AG04450 (cell line): ENCODE measurements at regions of chr12 and their contacts with region 1.

Region 1: GRCh38 chr12:56224102-56224701 is at the start of gene NABP2:
- DNase-seq: peak; percentile 92
- H3K4me3 ChIP-seq: peak within 1 kb of the TSS; percentile 82
- H3K27ac ChIP-seq: peak within 1 kb of the TSS; percentile 73
- H3K27me3 ChIP-seq: no peaks in the 10 kb centered on the region
- CTCF ChIP-seq: peak; percentile 82
- polyA plus RNA-seq, gene NABP2: 46.9 and 52.5 TPM in 2 replicates

Region 2: DNA sequence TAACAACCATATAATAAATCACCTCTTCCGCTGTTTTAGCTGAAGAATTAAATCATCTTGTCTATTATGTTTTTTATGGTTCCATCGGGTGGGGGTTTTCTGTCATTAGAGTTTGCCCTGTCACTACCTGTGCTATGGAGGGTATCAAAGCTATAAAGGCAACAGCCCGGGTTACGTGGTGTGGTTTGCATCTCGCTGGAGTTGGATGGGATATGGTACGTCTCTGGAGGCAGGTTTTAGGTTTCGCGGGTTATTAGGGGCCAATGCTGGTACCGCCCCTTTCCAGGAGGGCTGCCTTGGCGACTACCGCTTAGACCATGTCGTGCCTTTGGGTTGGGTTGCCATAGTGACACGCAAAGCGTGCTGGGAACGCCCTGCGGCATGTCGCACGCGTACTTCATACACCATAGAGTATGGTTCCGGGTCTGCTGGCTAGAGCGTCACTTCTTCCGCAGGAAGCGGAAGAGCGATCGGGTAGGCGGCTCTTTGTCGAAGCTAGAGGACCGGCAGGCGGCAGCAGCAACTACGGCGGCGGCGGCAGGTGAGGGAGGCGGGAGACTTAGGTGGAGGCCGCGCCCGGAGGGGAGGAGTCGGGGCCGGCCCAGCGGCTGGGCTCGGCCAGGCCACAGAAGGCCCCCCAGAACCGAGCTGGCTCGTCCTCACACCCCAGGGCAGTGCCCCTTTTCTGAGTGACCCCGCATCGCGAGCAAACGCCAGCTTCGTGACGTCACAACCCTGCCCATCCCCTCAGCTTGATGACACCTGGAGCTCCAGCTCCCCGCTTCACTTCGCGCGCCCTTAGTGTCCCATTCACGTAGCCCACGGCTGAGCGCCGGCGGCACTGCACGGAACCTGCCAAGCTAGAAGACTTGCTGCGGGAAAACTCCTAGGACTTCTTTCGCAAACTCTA is 106.2 kb before region 1 on chr12 and contains the start of gene ZC3H10:
- CTCF ChIA-PET with region 1: interaction called, 19 read pairs
- POLR2A ChIA-PET with region 1: interaction called, 14 read pairs
- DNase-seq: peak; percentile 99
- H3K4me3 ChIP-seq: peak within 1 kb of the TSS; percentile 93
- H3K27ac ChIP-seq: peak within 1 kb of the TSS; percentile 90
- H3K27me3 ChIP-seq: no peaks in the 10 kb centered on the region
- CTCF ChIP-seq: peak; percentile 62
- polyA plus RNA-seq, gene ZC3H10: 1.5 and 1.9 TPM in 2 replicates

Region 3: GRCh38 chr12:56146492-56147460 is 77.4 kb before region 1 on chr12:
- CTCF ChIA-PET with region 1: no interaction called
- POLR2A ChIA-PET with region 1: no interaction called
- DNase-seq: no peak
- H3K4me3 ChIP-seq: no peak overlapping the region
- H3K27ac ChIP-seq: no peak overlapping the region
- H3K27me3 ChIP-seq: no peaks in the 10 kb centered on the region
- CTCF ChIP-seq: no peak

Region 4: DNA sequence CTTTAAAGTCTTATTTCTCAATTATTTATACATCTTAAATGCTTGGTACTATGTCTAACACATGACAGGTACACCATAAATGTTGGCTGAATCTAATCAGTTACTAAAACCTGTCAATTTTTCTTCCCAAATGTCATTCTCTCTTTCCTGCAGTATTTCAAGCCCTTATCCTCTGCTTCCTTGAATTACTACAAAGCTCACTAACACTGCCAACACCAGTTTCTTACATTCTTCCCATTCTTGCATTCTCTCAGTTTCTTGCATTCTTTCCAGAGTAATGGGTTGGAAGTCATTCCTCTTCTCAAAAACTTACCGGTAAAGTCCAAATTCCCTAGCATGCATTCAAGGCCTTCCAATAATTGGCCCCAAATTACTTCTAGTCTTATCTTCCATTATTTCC is 25.4 kb before region 1 on chr12:
- CTCF ChIA-PET with region 1: interaction called, 11 read pairs
- POLR2A ChIA-PET with region 1: interaction called, 30 read pairs
- DNase-seq: no peak
- H3K4me3 ChIP-seq: no peak overlapping the region
- H3K27ac ChIP-seq: no peak overlapping the region
- H3K27me3 ChIP-seq: no peaks in the 10 kb centered on the region
- CTCF ChIP-seq: no peak

Region 5: DNA sequence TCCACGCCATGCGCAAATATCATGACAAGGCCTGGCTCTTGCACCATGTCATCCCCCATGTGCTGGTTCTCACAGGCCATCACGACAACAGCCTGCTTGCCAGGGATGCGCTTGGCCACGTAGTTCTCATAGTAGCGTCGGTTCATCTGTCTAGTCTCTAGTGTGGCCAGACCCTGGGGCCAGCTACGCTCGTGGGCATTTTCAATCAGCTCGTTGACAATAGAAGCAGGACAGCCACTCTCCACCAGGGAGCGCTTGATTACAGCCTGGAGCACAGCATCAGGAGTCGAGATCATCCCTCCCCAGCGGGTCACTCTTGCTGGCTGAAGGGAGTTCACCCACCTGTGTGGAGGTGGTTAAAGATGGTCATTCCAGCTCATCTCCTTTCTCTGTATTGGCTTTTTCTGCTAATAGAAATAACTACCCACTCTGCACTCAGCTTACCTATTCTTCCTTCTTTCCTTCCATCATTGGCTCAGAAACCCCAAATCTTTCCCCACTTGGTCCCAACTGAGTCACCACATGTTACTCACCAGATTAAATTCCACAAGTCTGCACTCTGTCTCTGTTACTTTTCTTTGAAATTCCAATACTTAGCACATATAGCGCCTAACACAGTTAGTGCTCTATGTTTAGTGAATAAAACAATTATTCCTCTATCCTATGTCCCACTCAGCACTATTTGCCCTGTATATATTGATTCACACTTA is 17.6 kb before region 1 on chr12:
- CTCF ChIA-PET with region 1: interaction called, 37 read pairs
- POLR2A ChIA-PET with region 1: interaction called, 20 read pairs
- DNase-seq: no peak
- H3K4me3 ChIP-seq: no peak overlapping the region
- H3K27ac ChIP-seq: no peak overlapping the region
- H3K27me3 ChIP-seq: no peaks in the 10 kb centered on the region
- CTCF ChIP-seq: peak; percentile 65

Region 6: DNA sequence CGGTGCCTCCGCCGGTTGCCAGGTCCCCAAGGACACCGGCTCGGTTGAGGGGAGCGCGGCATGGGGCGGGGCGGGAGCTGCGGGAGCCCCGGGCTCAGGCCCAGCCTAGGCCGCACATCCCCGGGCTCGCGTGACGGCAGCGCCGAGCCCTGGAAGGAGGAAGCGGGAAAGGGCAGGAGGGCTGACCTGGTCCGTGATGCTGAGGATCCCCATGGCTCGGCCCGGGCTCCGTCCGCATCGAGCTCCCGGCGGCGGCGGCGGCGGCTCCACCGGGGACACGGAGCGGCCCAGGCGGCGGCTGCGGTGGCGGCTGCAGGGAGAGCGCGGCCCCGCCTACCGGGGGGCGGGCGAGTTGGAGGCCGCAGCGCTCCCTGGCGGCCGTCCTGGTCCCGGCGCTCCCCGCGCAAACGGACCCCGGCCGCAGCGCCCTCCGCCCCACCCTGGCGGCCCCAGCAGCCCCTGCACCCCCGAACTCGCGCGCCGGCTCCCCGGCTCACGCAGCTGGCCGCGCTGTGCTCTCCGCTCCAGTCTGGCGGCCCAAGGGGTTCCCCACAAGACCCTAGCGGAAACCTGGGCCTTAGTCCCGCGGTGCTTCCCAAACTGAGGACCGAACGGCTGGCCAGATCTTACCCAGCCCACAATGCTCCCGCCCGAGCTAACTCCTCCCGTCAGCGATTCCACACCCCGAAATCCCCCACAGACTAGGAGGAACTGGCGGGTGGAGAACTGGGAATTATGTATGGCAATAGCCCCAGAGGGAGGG is 34.0 kb after region 1 on chr12 and contains the start of gene ANKRD52:
- CTCF ChIA-PET with region 1: interaction called, 13 read pairs
- POLR2A ChIA-PET with region 1: interaction called, 4 read pairs
- DNase-seq: peak; percentile 43
- H3K4me3 ChIP-seq: peak within 1 kb of the TSS; percentile 77
- H3K27ac ChIP-seq: peak within 1 kb of the TSS; percentile 73
- H3K27me3 ChIP-seq: no peaks in the 10 kb centered on the region
- CTCF ChIP-seq: peak; percentile 44
- polyA plus RNA-seq, gene ANKRD52: 16.0 and 20.2 TPM in 2 replicates

Region 7: DNA sequence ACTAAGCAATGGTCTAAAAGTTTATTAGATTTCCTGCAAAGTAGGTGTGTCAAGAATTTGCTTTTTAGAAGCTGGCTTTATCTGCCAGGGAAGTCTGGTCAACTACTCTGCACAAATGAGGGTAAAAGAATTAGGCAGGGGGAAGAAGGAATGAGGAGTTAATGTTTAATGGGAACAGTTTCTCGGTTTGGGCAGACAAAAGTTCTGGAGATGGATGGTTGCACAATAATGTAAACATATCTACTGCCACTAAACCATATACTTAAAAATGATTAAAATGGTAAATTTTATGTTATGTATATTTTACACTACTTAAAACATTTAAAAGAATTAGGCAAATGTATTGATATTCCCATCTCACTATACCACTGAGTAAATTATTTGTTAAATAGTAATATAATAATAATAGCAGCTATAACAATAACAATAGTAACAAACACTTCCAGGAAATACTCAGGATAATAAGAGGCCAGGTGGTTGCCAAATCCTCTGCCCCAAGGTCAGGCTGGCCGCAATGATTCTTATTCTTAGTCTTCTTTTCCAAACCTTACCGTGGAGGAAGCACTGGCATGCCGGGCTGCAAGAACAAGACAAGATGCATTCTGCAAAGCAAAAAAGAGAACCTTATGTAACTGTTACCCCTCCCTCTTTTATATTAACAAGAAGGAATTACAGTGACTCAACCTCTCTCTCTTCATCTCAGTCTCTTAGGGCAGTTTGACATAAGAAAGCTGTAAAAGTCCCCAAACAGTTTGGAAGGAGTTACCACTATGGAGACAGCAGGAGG is 62.0 kb after region 1 on chr12:
- CTCF ChIA-PET with region 1: interaction called, 10 read pairs
- POLR2A ChIA-PET with region 1: interaction called, 3 read pairs
- DNase-seq: no peak
- H3K4me3 ChIP-seq: no peak overlapping the region
- H3K27ac ChIP-seq: no peak overlapping the region
- H3K27me3 ChIP-seq: no peaks in the 10 kb centered on the region
- CTCF ChIP-seq: no peak